ENCODE measurements at regions of chr1 and their contacts with region 1.

Region 1: DNA sequence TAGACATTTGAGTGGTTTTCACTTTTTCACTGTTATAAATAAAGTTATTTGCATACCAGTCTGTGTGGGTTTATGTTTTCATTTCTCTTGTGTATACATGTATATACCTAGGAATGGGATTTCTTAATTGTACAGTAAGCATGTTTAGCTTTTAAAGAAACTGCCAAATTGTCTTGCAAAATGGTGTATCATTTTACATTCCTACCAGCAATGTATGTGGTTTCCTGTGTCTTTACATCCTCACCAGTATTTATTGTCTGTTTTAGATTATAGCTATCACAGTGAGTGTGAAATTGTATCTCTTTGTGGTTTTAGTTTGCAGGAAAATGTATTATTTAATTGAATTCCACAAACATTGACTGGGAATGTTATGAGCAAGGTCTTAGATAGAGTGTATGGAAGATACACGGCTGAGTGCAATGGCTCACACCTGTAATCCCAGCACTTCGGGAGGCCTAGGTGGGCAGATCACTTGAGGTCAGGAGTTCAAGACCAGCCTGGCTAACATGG is 57.3 kb downstream of the MACF1 start:
- DNase-seq: no peak
- CTCF ChIP-seq: no peak

Region 2: GRCh38 chr1:39098546-39099250 is 163.1 kb before region 1 on chr1:
- in situ Hi-C with region 1: loop called (anchors 5 kb)
- DNase-seq: peak; percentile 83
- CTCF ChIP-seq: peak; percentile 85

Region 3: DNA sequence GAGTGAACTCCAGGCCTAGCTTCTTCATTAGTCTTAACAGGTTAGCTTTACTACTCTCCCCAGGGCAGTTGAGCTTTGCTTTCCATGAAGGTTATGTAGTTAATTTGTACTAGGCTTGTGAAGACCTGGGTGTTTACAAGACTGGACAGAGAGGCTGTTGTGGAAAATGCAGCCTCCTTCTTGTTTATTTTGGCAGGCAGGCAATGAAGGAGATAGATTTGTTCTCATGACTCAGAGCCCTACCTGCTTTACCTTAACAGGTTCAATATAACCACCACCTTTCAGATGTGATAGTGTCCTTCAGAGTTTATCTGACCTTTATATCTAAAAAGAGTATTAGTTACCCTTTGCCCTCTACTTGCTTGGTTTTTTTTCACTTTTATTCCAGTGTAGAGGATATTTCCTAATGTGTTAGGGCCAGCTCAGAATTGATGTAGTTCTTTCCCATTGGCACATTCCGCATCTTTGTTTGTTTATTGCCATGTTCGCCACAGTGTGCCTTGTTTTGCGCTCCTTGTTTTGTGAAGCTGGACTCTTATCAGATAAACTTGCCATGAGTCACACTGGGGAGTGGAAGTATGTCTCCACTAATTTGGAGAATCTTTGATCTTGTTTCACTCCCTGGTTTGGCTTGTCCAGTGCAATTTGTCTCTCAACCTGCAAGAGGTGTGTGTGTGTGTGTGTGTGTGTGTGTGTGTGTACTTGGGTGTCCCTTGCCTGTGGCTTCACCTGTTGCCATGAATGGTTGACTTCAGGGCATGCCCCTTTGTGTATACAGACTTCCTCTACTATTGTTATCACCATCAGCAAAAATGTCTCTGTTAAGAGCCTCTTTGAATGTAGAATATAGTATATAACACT is 144.7 kb before region 1 on chr1:
- in situ Hi-C with region 1: no loop called
- DNase-seq: no peak
- CTCF ChIP-seq: no peak

Measured in GM13977 (cell line).